ENCODE measurements at regions of chr3 and their contacts with region 1.

Region 1: GRCh38 chr3:58704745-58705144 is 38.2 kb upstream of the FAM3D start:
- DNase-seq: peak; percentile 21
- H3K4me3 Mint-ChIP-seq: no peak overlapping the region
- H3K27ac Mint-ChIP-seq: no peak overlapping the region
- H3K4me1 Mint-ChIP-seq: peaks cover 18% of the 10 kb centered on the region
- H3K27me3 Mint-ChIP-seq: no peaks in the 10 kb centered on the region
- CTCF ChIP-seq: no peak

Region 2: GRCh38 chr3:58491506-58492402 is 213.0 kb before region 1 on chr3 and contains the start of gene KCTD6:
- CTCF ChIA-PET with region 1: no interaction called
- intact Hi-C with region 1: no loop called
- DNase-seq: peak; percentile 96
- H3K4me3 Mint-ChIP-seq: peak within 1 kb of the TSS; percentile 81
- H3K27ac Mint-ChIP-seq: peak within 1 kb of the TSS; percentile 63
- H3K4me1 Mint-ChIP-seq: peaks cover 51% of the 10 kb centered on the region
- H3K27me3 Mint-ChIP-seq: no peaks in the 10 kb centered on the region
- CTCF ChIP-seq: peak; percentile 71
- total RNA-seq, gene KCTD6: 10.7 and 11.4 TPM in 2 replicates

Region 3: GRCh38 chr3:58647381-58648141 is 57.2 kb before region 1 on chr3:
- CTCF ChIA-PET with region 1: no interaction called
- intact Hi-C with region 1: loop called (anchors 5 kb)
- DNase-seq: peak; percentile 59
- H3K4me3 Mint-ChIP-seq: no peak overlapping the region
- H3K27ac Mint-ChIP-seq: peak overlapping the region; percentile 35
- H3K4me1 Mint-ChIP-seq: peaks cover 11% of the 10 kb centered on the region
- H3K27me3 Mint-ChIP-seq: peaks cover 7% of the 10 kb centered on the region
- CTCF ChIP-seq: no peak

Region 4: DNA sequence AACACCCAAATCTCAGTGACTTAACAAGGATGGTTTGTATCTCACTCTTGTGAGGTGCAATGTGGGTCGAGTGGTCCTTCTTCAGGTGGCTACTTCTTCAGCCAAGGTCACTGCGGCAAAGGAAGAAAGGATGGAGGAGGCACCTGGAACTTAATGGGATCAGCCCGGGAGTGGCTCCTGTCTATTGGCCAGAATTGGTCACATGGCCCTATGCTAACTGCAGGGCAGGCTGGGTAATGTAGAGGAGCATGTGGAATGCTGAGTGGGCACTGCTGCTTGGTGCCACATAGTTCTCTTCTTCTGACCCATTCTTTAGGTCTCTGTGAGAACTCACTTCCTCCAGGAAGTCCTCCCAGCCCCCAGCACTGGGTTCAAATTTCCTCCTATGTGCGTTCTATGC is 17.9 kb before region 1 on chr3:
- CTCF ChIA-PET with region 1: no interaction called
- intact Hi-C with region 1: loop called (anchors 2 kb)
- DNase-seq: no peak
- H3K4me3 Mint-ChIP-seq: no peak overlapping the region
- H3K27ac Mint-ChIP-seq: no peak overlapping the region
- H3K4me1 Mint-ChIP-seq: no peaks in the 10 kb centered on the region
- H3K27me3 Mint-ChIP-seq: no peaks in the 10 kb centered on the region
- CTCF ChIP-seq: no peak

Region 5: DNA sequence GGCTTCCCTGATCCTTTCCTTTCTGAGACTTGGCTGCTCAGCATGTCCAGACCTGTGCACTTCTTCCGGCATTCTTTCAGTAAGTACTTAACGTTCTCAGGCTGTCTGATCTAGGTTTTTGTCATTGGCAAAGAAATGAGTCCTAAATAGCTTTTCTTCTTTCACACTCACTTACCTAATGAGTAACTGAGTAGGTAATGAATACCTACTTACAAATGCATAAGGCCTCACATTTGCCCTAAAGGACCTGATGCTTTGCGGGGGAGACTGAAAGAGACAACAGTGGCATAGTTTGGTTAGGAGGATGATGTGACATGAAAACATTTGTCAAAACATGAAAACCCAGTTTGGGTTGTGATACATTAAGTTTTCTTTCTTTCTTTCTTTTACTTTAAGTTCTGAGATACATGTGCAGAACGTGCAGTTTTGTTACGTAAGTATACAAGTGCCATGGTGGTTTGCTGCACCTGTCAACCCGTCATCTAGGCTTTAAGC is 861.8 kb after region 1 on chr3:
- CTCF ChIA-PET with region 1: no interaction called
- intact Hi-C with region 1: no loop called
- DNase-seq: no peak
- H3K4me3 Mint-ChIP-seq: no peak overlapping the region
- H3K27ac Mint-ChIP-seq: no peak overlapping the region
- H3K4me1 Mint-ChIP-seq: no peaks in the 10 kb centered on the region
- H3K27me3 Mint-ChIP-seq: peaks cover 13% of the 10 kb centered on the region
- CTCF ChIP-seq: no peak

Measured in Calu3 (cell line).